ENCODE measurements at regions of chr2 and their contacts with region 1.

Region 1: DNA sequence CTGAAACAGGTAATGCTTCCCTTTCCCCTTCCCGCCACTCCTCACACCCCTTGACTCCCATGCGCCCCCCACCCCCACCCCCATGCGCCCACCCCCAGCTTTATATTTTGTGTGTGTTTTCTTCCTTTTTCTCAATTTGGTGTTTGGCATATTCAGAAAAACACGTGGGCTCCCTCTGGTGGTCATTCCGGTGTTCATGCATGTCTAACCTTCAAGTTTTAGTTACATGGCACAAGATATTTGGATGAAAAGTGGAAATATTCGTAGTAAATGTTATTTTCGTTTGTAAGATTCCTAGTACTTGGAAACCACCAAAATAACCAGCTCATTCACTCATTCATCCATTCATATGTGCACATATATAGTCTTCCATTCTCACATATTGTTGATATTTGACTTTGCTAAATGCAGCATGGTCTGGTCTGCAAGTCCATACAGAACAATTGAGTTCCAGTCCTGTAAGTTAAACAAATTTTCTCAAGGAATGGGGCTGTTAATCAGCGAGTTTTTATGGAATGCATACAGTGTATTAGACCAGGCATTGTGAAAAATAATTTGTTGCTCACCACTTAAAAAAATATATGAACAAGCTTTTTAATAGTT is 143.6 kb upstream of the MAP3K20 start:
- DNase-seq: peak; percentile 10 to 68
- ATAC-seq: peak; percentile 69 to 85; a peak in 3 of 6 replicates
- H3K4me3 ChIP-seq: no peak overlapping the region
- H3K27ac ChIP-seq: no peak overlapping the region
- H3K4me1 ChIP-seq: peaks cover 9% of the 10 kb centered on the region; the same call in 2 of the 3 replicates
- CTCF ChIP-seq: peak; percentile 83
- EP300 ChIP-seq: no peak
- POLR2A ChIP-seq: no peak
- RAD21 ChIP-seq: peak; percentile 81 to 88

Region 2: DNA sequence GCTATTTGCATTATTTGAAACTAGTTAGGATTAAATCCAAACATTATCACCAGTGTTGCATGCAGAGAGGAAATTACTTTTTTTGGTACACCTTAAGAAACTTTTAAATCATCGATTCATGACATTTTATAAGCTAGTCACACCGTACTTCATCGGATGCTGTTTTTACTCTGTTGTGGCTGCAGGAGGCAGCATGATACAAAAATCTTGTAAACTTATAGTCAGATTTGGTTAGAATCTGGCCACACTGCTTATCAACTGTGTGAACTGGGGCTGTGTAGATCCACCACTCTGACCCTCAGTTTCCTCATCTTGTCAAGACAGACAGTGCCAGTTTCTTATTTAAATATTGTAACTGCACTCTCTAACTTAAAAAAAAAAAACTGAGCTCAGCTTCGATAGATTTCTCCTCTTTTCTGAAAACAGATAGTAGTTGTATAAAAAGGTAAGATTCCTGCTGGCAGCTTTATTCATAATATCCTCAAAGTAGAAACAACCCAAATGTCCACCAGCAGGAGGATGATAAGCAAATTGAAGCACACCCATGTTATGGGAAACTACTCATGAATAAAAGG is 118.6 kb before region 1 on chr2:
- CTCF ChIA-PET with region 1: interaction called, 74 read pairs
- POLR2A ChIA-PET with region 1: no interaction called
- DNase-seq: peak in 1 of 2 experiments; percentile 43
- ATAC-seq: peak; percentile 66 to 85; a peak in 4 of 6 replicates
- H3K4me3 ChIP-seq: no peak overlapping the region
- H3K27ac ChIP-seq: no peak overlapping the region
- H3K4me1 ChIP-seq: no peaks in the 10 kb centered on the region
- CTCF ChIP-seq: peak; percentile 59
- EP300 ChIP-seq: no peak
- POLR2A ChIP-seq: no peak
- RAD21 ChIP-seq: peak; percentile 62 to 71

Region 3: GRCh38 chr2:172878260-172878659 is 53.8 kb before region 1 on chr2:
- CTCF ChIA-PET with region 1: interaction called, 13 read pairs
- POLR2A ChIA-PET with region 1: no interaction called
- DNase-seq: no peak
- ATAC-seq: no peak
- H3K4me3 ChIP-seq: no peak overlapping the region
- H3K27ac ChIP-seq: no peak overlapping the region
- H3K4me1 ChIP-seq: no peaks in the 10 kb centered on the region
- CTCF ChIP-seq: no peak
- EP300 ChIP-seq: no peak
- POLR2A ChIP-seq: no peak
- RAD21 ChIP-seq: no peak

Region 4: GRCh38 chr2:172914341-172915004 is 17.5 kb before region 1 on chr2:
- CTCF ChIA-PET with region 1: interaction called, 46 read pairs
- POLR2A ChIA-PET with region 1: no interaction called
- DNase-seq: no peak
- ATAC-seq: no peak
- H3K4me3 ChIP-seq: no peak overlapping the region
- H3K27ac ChIP-seq: no peak overlapping the region
- H3K4me1 ChIP-seq: no peaks in the 10 kb centered on the region; the same call in 2 of the 3 replicates
- CTCF ChIP-seq: no peak
- EP300 ChIP-seq: no peak
- POLR2A ChIP-seq: no peak
- RAD21 ChIP-seq: no peak

Region 5: GRCh38 chr2:172953970-172954852 is 22.2 kb after region 1 on chr2:
- CTCF ChIA-PET with region 1: interaction called, 14 read pairs
- POLR2A ChIA-PET with region 1: no interaction called
- DNase-seq: no peak
- ATAC-seq: no peak
- H3K4me3 ChIP-seq: no peak overlapping the region
- H3K27ac ChIP-seq: no peak overlapping the region
- H3K4me1 ChIP-seq: no peaks in the 10 kb centered on the region
- CTCF ChIP-seq: no peak
- EP300 ChIP-seq: no peak
- POLR2A ChIP-seq: no peak
- RAD21 ChIP-seq: no peak